ENCODE measurements at regions of chr5 and their contacts with region 1.

Region 1: DNA sequence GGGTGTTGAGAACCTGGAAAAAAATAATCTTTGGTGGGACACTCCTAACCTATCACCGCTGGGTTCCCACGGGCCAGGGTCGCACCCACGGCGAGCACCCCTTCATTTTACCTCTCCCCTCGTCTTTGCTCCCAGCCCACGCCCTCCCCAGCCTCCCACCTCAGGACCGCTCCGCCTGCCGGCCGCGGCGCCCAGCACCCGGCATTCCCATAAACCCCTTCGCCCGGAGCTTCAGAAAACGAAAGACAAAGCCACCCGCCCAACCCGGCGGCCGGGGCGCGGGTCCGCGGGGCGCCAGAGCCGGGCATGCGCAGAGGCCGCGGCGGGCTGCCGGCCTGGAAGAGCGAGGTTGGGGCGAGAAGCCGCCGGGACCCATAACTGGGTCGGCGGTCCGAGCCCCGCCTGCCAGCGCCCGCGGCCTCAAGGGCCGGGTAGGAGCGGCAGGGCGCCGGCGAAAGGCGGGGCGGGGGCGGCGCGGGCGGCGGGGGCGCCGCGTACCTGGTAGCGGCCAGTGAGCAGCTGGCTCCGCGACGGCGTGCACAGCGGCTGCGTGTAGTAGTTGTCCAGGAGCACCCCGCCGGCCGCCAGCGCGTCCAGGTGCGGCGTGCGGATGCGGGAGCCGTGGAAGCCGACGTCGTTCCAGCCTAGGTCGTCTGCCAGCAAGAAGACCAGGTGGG is 533 bp downstream of the ARSB start:
- DNase-seq: peak; percentile 90
- ATAC-seq: peak; percentile 60
- H3K4me3 ChIP-seq: peak overlapping the region; percentile 44 to 85 (median 84)
- H3K4me3 Mint-ChIP-seq: peak overlapping the region; percentile 89
- H3K27ac ChIP-seq: peak overlapping the region; percentile 67 to 89
- H3K27ac Mint-ChIP-seq: peak overlapping the region; percentile 92
- H3K4me1 ChIP-seq: peaks cover 18 to 24% of the 10 kb centered on the region in 2 donors
- H3K4me1 Mint-ChIP-seq: peaks cover 43% of the 10 kb centered on the region
- H3K27me3 ChIP-seq: no peaks in the 10 kb centered on the region
- H3K27me3 Mint-ChIP-seq: no peaks in the 10 kb centered on the region
- CTCF ChIP-seq: no peak

Region 2: DNA sequence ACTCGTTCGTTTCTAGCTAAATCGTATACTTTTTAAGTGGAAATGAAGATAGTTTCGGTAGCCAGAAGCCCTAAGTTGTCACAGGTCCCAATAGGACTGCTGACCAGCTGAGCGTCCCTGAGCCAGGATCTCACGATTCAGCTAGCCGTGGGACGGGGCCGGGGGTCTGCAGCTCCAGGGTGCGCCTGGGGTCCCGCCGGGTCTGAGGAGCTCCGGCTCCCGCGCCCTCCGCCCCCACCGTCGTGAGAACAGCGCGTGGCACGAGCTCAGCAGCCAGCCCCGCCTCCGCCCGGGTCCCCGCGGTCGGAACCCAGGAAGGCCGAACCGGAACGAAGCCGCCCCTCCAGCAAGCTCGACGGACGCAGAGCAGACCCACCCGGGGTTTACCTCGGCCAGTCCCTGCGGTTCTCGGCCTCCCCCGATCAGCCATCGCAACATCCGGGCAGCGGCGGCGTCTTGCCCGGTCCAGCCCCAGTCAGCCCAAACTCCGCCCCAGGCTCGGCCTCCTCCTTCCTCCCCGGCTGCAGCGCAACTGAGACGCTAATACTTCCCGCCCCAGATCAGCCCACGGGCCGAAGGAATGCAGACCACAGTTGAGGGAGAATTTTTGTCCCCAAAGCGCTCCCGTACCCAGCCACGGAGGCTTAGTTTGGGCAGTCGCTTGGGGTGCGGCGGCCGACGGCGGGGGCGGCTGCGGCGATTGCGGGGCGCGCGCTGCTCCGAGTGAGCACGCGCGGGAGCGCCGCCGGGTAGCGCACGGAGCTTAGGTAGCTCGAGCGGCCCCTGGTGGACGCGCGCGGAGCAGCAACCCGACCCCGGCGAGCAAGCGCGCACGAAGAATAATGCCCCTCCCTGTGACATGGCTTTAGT is 1492.6 kb before region 1 on chr5 and contains the start of gene WDR41:
- CTCF ChIA-PET with region 1: no interaction called
- POLR2A ChIA-PET with region 1: interaction called, 4 read pairs
- intact Hi-C with region 1: loop called (anchors 5 kb)
- DNase-seq: peak; percentile 93
- ATAC-seq: peak; percentile 85
- H3K4me3 ChIP-seq: peak within 1 kb of the TSS; percentile 60 to 98 (median 95)
- H3K4me3 Mint-ChIP-seq: peak within 1 kb of the TSS; percentile 95
- H3K27ac ChIP-seq: peak within 1 kb of the TSS; percentile 71 to 88
- H3K27ac Mint-ChIP-seq: peak within 1 kb of the TSS; percentile 97
- H3K4me1 ChIP-seq: peaks cover 5 to 6% of the 10 kb centered on the region in 2 donors
- H3K4me1 Mint-ChIP-seq: peaks cover 20% of the 10 kb centered on the region
- H3K27me3 ChIP-seq: no peaks in the 10 kb centered on the region
- H3K27me3 Mint-ChIP-seq: peaks cover 6% of the 10 kb centered on the region
- CTCF ChIP-seq: peak; percentile 92
- total RNA-seq, gene WDR41: 30.6 and 36.3 TPM in 2 replicates

Region 3: GRCh38 chr5:78221964-78222451 is 762.6 kb before region 1 on chr5:
- CTCF ChIA-PET with region 1: no interaction called
- POLR2A ChIA-PET with region 1: no interaction called
- intact Hi-C with region 1: loop called (anchors 2 kb)
- DNase-seq: peak; percentile 90
- ATAC-seq: peak; percentile 100
- H3K4me3 ChIP-seq: no peak overlapping the region
- H3K4me3 Mint-ChIP-seq: peak overlapping the region; percentile 4
- H3K27ac ChIP-seq: peak overlapping the region; percentile 29 to 33
- H3K27ac Mint-ChIP-seq: peak overlapping the region; percentile 85
- H3K4me1 ChIP-seq: peaks cover 8 to 10% of the 10 kb centered on the region in 2 donors
- H3K4me1 Mint-ChIP-seq: peaks cover 18% of the 10 kb centered on the region
- H3K27me3 ChIP-seq: no peaks in the 10 kb centered on the region
- H3K27me3 Mint-ChIP-seq: no peaks in the 10 kb centered on the region
- CTCF ChIP-seq: peak; percentile 67

Region 4: DNA sequence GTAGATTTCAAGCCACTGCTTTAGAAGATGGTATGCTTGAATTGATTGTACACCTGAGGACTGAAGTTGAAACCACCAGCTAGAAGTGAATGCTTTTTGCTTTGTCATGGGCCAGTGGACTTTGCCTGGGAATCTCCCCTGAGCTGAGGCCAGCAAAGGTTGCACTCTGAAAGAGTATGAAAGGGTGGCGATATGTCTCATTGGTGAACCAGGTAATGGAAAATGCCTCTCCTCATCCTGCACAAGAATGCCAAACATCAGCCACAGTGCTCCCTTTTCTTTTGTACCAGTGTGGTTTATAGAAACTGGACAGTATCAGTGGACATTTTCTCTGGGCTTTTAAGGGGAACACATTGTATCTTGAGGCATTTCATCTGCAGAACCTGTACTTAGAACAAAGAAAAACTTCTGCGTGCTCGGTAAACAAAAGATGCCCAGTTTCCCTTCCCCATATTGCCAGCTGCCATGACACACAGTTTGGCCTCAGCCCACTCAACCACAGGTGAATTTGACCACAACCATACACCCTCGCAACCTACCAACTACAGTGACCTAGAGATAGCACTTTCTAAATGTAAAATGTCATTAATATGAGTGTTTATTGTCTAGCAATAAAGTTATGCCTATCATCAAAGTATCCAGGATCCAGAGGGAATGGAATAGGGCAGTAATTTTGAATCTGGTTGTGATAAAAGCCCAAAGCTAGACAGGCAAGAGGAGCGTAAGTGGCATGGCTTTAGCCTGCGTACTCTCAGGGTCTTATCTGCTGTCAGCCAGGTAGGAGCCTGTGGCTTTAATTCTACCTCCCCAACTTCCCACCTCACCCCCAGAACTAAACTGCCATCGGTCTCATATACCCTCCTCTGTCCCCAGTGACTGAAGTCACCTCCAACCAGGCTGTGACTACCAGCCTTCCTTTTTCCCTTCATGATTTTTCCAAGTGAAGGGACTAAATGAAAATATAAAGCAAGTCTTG is 256.5 kb before region 1 on chr5:
- CTCF ChIA-PET with region 1: no interaction called
- POLR2A ChIA-PET with region 1: no interaction called
- intact Hi-C with region 1: loop called (anchors 10 kb)
- DNase-seq: peak; percentile 88
- ATAC-seq: peak; percentile 84
- H3K4me3 ChIP-seq: peak overlapping the region in 3 of 5 experiments; percentile 16 to 30 (median 25)
- H3K4me3 Mint-ChIP-seq: peak overlapping the region; percentile 79
- H3K27ac ChIP-seq: peak overlapping the region; percentile 85 to 89
- H3K27ac Mint-ChIP-seq: peak overlapping the region; percentile 99
- H3K4me1 ChIP-seq: peaks cover 60 to 68% of the 10 kb centered on the region in 2 donors
- H3K4me1 Mint-ChIP-seq: peaks cover 67% of the 10 kb centered on the region
- H3K27me3 ChIP-seq: no peaks in the 10 kb centered on the region
- H3K27me3 Mint-ChIP-seq: no peaks in the 10 kb centered on the region
- CTCF ChIP-seq: no peak

Region 5: GRCh38 chr5:79109527-79110492 is 125.2 kb after region 1 on chr5:
- CTCF ChIA-PET with region 1: no interaction called
- POLR2A ChIA-PET with region 1: no interaction called
- intact Hi-C with region 1: loop called (anchors 5 kb)
- DNase-seq: peak; percentile 26
- ATAC-seq: peak; percentile 33
- H3K4me3 ChIP-seq: no peak overlapping the region
- H3K4me3 Mint-ChIP-seq: no peak overlapping the region
- H3K27ac ChIP-seq: no peak overlapping the region
- H3K27ac Mint-ChIP-seq: no peak overlapping the region
- H3K4me1 ChIP-seq: no peaks in the 10 kb centered on the region
- H3K4me1 Mint-ChIP-seq: no peaks in the 10 kb centered on the region
- H3K27me3 ChIP-seq: peaks cover 0 to 41% (median 18%) of the 10 kb centered on the region in 4 experiments
- H3K27me3 Mint-ChIP-seq: peaks cover 63% of the 10 kb centered on the region
- CTCF ChIP-seq: peak; percentile 70

Region 6: DNA sequence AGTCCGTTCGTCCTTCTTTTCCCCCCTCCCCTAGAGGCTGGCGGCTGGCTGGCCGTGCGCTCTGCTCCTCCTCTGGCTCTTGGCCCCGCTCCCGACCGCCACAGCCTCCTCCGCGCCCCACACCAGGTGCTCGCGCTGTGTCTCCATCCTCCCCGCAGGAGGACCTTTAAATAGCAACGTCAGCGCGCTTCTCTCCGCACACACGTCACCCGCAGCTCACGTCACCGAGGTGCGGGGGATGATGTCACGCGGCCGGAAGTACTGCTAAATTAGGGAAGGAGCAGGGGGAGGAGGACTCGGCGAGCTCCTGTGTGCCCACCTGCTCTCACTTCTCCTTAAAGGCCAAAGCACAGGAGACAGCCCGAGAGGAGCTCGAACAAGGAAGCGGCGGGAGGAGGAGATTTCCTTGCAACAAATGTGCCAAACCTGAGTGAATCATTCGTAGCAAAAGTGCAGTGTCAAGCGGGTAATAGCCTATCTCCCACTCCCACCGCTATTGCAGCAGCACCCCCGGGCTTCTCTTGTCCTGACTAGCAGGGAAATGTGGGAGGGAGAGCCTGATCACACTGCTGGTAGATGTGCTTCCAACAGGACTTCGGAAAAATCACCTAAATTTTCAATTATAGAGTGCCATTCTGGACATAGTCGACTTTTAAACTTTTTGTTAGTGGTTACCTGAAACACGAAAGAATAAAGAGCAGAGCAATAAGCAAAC is 530.0 kb after region 1 on chr5:
- CTCF ChIA-PET with region 1: no interaction called
- POLR2A ChIA-PET with region 1: no interaction called
- intact Hi-C with region 1: loop called (anchors 2 kb)
- DNase-seq: peak; percentile 98
- ATAC-seq: peak; percentile 79
- H3K4me3 ChIP-seq: peak overlapping the region; percentile 32 to 85 (median 76)
- H3K4me3 Mint-ChIP-seq: peak overlapping the region; percentile 100
- H3K27ac ChIP-seq: peak overlapping the region; percentile 89 to 94
- H3K27ac Mint-ChIP-seq: peak overlapping the region; percentile 100
- H3K4me1 ChIP-seq: peaks cover 26 to 29% of the 10 kb centered on the region in 2 donors
- H3K4me1 Mint-ChIP-seq: peaks cover 36% of the 10 kb centered on the region
- H3K27me3 ChIP-seq: peaks cover 5 to 31% (median 28%) of the 10 kb centered on the region in 4 experiments
- H3K27me3 Mint-ChIP-seq: peaks cover 29% of the 10 kb centered on the region
- CTCF ChIP-seq: no peak

Region 7: GRCh38 chr5:80255732-80256479 is 1271.3 kb after region 1 on chr5 and contains the start of gene SERINC5:
- CTCF ChIA-PET with region 1: no interaction called
- POLR2A ChIA-PET with region 1: interaction called, 3 read pairs
- intact Hi-C with region 1: loop called (anchors 10 kb)
- DNase-seq: peak; percentile 87
- ATAC-seq: peak; percentile 87
- H3K4me3 ChIP-seq: peak within 1 kb of the TSS; percentile 80 to 93 (median 89)
- H3K4me3 Mint-ChIP-seq: peak within 1 kb of the TSS; percentile 100
- H3K27ac ChIP-seq: peak within 1 kb of the TSS; percentile 78 to 79
- H3K27ac Mint-ChIP-seq: peak within 1 kb of the TSS; percentile 98
- H3K4me1 ChIP-seq: peaks cover 9 to 24% of the 10 kb centered on the region in 2 donors
- H3K4me1 Mint-ChIP-seq: peaks cover 28% of the 10 kb centered on the region
- H3K27me3 ChIP-seq: no peaks in the 10 kb centered on the region
- H3K27me3 Mint-ChIP-seq: no peaks in the 10 kb centered on the region
- CTCF ChIP-seq: no peak
- total RNA-seq, gene SERINC5: 9.5 and 11.4 TPM in 2 replicates

Measured in B cell (primary cell).